Heart right ventricle (tissue), 16 donors: ENCODE measurements at regions of chr9 and their contacts with region 1.

Region 1: GRCh38 chr9:19320495-19320894 is 59.5 kb downstream of the RPS6 start:
- DNase-seq: no peak
- ATAC-seq: no peak
- H3K4me3 ChIP-seq: no peak overlapping the region
- H3K27ac ChIP-seq: no peak overlapping the region
- H3K4me1 ChIP-seq: no peaks in the 10 kb centered on the region
- H3K27me3 ChIP-seq: no peaks in the 10 kb centered on the region
- CTCF ChIP-seq: no peak

Region 2: GRCh38 chr9:19216466-19216865 is 104.0 kb before region 1 on chr9:
- intact Hi-C with region 1: no loop called
- DNase-seq: no peak
- ATAC-seq: peak in 4 of 8 donors; percentile 24 to 67 (median 50)
- H3K4me3 ChIP-seq: no peak overlapping the region
- H3K27ac ChIP-seq: no peak overlapping the region
- H3K4me1 ChIP-seq: no peaks in the 10 kb centered on the region
- H3K27me3 ChIP-seq: no peaks in the 10 kb centered on the region
- CTCF ChIP-seq: no peak

Region 3: DNA sequence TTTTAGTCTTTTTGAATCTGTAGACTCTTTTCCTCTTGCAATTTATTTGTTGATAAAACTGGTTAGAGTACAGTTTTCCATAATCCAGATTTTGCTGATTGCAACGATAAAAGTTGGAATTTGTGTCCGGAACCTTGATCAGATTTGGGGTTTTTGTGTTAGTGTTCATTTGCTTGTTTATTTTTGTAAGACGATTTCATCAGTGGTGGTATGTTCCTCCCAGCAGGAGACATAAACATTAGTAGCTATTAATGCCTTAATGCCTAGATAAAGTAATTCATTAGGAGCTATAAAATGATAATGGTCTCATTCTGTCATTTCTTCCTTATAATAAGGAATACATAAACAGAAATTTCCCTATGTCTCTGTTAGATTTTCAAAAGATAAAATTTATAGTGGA is 38.2 kb after region 1 on chr9:
- intact Hi-C with region 1: loop called in 1 of 10 experiments (anchors 5 kb)
- DNase-seq: no peak
- ATAC-seq: no peak
- H3K4me3 ChIP-seq: no peak overlapping the region
- H3K27ac ChIP-seq: no peak overlapping the region
- H3K4me1 ChIP-seq: no peaks in the 10 kb centered on the region
- H3K27me3 ChIP-seq: no peaks in the 10 kb centered on the region
- CTCF ChIP-seq: no peak

Region 4: GRCh38 chr9:19397845-19398244 is 77.3 kb after region 1 on chr9:
- intact Hi-C with region 1: no loop called
- DNase-seq: no peak
- ATAC-seq: no peak
- H3K4me3 ChIP-seq: no peak overlapping the region
- H3K27ac ChIP-seq: no peak overlapping the region
- H3K4me1 ChIP-seq: no peaks in the 10 kb centered on the region
- H3K27me3 ChIP-seq: no peaks in the 10 kb centered on the region
- CTCF ChIP-seq: no peak